ENCODE measurements at regions of chr13 and their contacts with region 1.

Region 1: DNA sequence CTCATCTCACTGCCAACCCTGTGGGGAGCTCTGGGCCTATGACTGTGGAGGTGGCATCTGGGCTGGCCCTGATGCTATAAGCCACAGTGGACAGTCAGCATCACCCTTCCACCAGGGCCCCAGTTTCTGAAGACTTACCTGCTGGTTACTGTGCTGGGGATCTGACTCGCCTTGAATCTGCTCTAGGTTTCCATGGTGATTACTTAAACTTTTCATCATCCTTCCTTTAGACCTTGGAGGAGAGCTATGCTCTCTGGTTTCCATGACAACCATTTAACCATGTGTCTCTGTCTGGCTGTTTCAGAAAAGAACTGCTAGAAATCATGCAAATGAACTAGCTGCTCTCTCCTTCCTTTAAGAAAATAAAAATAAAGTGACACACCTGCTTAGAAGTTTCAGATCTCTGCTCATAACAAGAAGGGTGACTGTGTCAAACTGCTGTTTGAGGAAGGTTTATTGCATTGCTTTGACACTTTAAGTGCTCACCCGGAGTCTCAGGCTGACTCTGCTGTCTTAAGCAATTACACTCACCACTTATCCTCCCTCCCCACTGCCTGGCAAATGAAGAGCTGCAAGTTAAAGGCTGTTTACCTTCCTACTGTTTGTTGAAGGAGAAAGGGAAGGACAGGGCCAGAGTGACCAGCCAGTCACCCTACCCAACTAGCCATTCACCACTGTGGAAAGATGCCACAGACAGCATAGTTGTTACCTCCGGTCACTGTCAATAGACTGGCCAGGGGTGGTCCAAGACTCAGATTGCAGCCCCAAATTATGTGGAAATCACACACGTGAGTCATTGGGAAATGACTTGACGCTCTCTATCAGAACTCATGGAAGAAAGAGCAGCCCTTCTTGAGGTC is 87.6 kb downstream of the HSPH1 start:
- DNase-seq: peak; percentile 82
- H3K4me3 Mint-ChIP-seq: no peak overlapping the region
- H3K27ac Mint-ChIP-seq: peak overlapping the region; percentile 62
- H3K4me1 Mint-ChIP-seq: peaks cover 13% of the 10 kb centered on the region
- H3K27me3 Mint-ChIP-seq: peaks cover 9% of the 10 kb centered on the region

Region 2: GRCh38 chr13:29448174-29448573 is 1625.9 kb before region 1 on chr13:
- CTCF ChIA-PET with region 1: no interaction called
- POLR2A ChIA-PET with region 1: no interaction called
- intact Hi-C with region 1: no loop called
- DNase-seq: no peak
- H3K4me3 Mint-ChIP-seq: no peak overlapping the region
- H3K27ac Mint-ChIP-seq: no peak overlapping the region
- H3K4me1 Mint-ChIP-seq: no peaks in the 10 kb centered on the region
- H3K27me3 Mint-ChIP-seq: peaks cover 19% of the 10 kb centered on the region

Region 3: DNA sequence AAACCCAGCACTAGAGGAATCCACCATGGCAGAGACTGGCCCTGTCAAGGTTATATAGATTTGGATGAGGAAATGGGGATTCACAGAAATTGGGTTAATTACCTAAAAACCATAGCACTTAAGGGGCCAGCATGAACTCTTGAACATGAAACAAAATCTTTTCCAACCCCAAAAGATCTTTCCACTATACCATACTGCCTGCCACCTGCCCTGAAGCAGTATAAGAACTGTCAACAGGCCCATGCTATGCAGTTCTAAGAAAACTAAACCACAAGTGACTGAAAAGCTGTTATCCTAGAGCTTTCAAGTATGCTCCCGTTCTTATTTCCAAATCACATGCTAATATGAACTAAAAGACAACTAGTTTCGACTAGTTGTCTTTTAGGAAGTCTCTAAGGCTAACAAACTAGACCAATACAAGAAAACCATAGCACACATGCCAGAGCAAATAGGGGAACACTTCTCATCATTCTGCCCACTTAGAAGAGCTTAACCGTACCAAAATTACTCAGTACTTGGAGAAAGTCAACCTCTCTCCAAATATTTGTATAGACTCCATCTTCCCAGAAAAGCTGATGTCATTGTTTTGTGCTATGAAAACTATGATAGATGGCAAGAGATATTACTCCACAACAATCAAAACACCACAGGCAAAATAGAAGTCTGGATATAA is 60.1 kb after region 1 on chr13:
- CTCF ChIA-PET with region 1: no interaction called
- POLR2A ChIA-PET with region 1: no interaction called
- intact Hi-C with region 1: loop called (anchors 1 kb)
- DNase-seq: no peak
- H3K4me3 Mint-ChIP-seq: no peak overlapping the region
- H3K27ac Mint-ChIP-seq: peak overlapping the region; percentile 50
- H3K4me1 Mint-ChIP-seq: peaks cover 48% of the 10 kb centered on the region
- H3K27me3 Mint-ChIP-seq: no peaks in the 10 kb centered on the region

Measured in activated CD4-positive, alpha-beta memory T cell treated with anti-CD3 and anti-CD28 coated beads for 36 hours (primary cell).